ENCODE measurements at regions of chr10 and their contacts with region 1.

Region 1: DNA sequence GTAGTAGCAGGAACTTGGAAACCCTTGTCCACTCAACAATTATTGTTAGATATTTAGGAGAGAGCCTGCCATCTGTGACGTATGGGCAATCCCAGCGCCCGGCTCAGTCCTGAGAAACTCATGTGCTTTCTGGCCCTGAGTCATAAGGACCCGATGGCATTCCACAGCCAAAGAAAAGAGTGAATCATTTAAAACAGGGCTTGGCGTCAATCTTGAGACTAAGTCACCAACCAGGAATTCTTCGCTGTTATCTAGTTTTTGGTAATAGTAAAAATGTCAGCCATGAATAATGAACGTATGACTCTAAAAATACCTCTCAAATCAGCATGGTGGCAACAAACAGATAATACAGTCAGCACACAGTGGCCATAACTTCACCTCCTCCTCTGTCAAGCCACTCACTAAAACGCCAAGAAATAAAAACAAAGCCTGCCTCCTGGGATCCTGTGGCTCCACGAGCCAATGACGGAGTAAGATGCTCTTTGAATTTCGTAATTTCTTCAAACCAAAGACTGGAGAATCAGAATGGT is 140.8 kb downstream of the ADAM12 start:
- DNase-seq: no peak

Region 2: GRCh38 chr10:126062131-126062981 is 185.2 kb before region 1 on chr10:
- intact Hi-C with region 1: loop called (anchors 5 kb)
- DNase-seq: peak; percentile 86

Region 3: GRCh38 chr10:126133906-126134656 is 113.4 kb before region 1 on chr10:
- intact Hi-C with region 1: no loop called
- DNase-seq: no peak